ENCODE measurements at regions of chr17 and their contacts with region 1.

Region 1: GRCh38 chr17:79789534-79790353 is 7.1 kb downstream of the CBX8 start:
- DNase-seq: no peak
- H3K4me3 ChIP-seq: peak overlapping the region in 1 of 4 donors; percentile 1
- H3K27ac ChIP-seq: no peak overlapping the region
- H3K4me1 ChIP-seq: peaks cover 0 to 48% (median 35%) of the 10 kb centered on the region in 4 donors
- H3K27me3 ChIP-seq: peaks cover 57 to 100% (median 99%) of the 10 kb centered on the region in 3 donors
- CTCF ChIP-seq: peak; percentile 37 to 86 (median 63)
- EP300 ChIP-seq: no peak
- POLR2A ChIP-seq: no peak

Region 2: GRCh38 chr17:79777894-79778503 is 11.7 kb before region 1 on chr17 and contains the start of gene CBX2:
- intact Hi-C with region 1: loop called (anchors 2 kb)
- DNase-seq: peak; percentile 86
- H3K4me3 ChIP-seq: peak within 1 kb of the TSS; percentile 36 to 62 (median 54)
- H3K27ac ChIP-seq: peak within 1 kb of the TSS; percentile 14 to 54 (median 34)
- H3K4me1 ChIP-seq: peaks cover 0 to 25% (median 18%) of the 10 kb centered on the region in 4 donors
- H3K27me3 ChIP-seq: peaks cover 34 to 94% (median 85%) of the 10 kb centered on the region in 3 donors
- CTCF ChIP-seq: no peak
- EP300 ChIP-seq: no peak
- POLR2A ChIP-seq: no peak
- total RNA-seq, gene CBX2: 0.33 to 0.95 (median 0.36) TPM in 3 of 4 donors, not detected in the other

Region 3: DNA sequence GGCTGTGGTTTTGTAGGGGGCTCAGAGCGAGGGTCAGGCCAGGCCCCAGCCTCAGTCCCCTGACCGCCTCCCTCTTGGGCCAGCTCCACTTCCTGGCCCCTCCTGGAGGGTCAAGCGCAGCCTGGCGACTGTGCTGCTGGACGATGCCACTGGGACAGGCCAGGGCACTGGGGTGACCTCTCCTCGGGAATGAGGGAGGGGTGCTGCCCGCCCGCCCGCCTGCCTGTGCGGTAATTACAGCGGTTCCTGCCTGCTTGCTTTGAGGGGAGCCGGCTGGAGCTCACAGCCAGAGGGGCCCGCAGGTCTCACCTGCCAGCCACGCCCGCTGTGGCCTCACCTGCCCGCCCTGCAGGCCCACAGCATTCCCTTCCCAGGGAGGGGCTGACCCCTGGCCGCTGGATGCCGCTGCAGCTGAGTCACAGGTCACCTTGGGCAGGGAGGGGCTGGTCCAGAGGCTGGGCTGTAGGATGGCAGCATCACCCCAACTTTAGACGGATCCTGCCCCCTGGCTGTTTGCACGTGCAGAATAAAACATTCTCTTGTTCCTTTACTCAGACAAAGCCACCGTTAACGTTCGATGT is 126.2 kb after region 1 on chr17:
- intact Hi-C with region 1: loop called (anchors 5 kb)
- DNase-seq: no peak
- H3K4me3 ChIP-seq: no peak overlapping the region
- H3K27ac ChIP-seq: no peak overlapping the region
- H3K4me1 ChIP-seq: peaks cover 0 to 16% (median 13%) of the 10 kb centered on the region in 4 donors
- H3K27me3 ChIP-seq: peaks cover 3 to 32% (median 8%) of the 10 kb centered on the region in 3 donors
- CTCF ChIP-seq: peak; percentile 14 to 28 (median 20)
- EP300 ChIP-seq: no peak
- POLR2A ChIP-seq: no peak

Region 4: GRCh38 chr17:80263253-80264204 is 473.8 kb after region 1 on chr17:
- intact Hi-C with region 1: no loop called
- DNase-seq: peak; percentile 95
- H3K4me3 ChIP-seq: peak overlapping the region; percentile 18 to 42 (median 39)
- H3K27ac ChIP-seq: peak overlapping the region; percentile 94 to 100 (median 99)
- H3K4me1 ChIP-seq: peaks cover 0 to 41% (median 39%) of the 10 kb centered on the region in 4 donors
- H3K27me3 ChIP-seq: no peaks in the 10 kb centered on the region
- CTCF ChIP-seq: no peak
- EP300 ChIP-seq: no peak
- POLR2A ChIP-seq: no peak

Measured in sigmoid colon (tissue), 7 donors.